ENCODE measurements at regions of chr11 and their contacts with region 1.

Region 1: DNA sequence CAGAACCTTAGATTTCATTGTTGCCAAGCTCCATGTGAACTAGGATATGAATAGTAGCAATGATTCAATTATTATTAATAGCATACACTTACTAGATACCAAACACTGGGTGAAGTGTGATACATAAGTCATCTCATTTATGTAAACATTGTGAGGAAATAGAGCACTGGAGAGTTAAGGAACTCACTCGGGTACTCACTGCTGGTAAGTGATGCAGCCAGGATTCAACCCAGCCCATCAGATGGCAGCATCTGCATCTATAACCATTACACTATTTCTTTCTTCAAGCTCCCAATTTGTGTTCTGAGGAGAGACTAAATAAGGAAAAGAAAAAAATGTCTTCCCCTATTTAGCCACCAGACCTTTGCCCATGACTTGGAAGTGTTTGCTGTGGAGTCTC is 10.2 kb upstream of the ALG8 start:
- DNase-seq: no peak
- ATAC-seq: peak in 7 of 8 donors; percentile 65 to 93 (median 75)
- H3K4me3 ChIP-seq: no peak overlapping the region
- H3K27ac ChIP-seq: no peak overlapping the region
- H3K4me1 ChIP-seq: peaks cover 0 to 10% (median 0%) of the 10 kb centered on the region in 9 donors
- H3K27me3 ChIP-seq: no peaks in the 10 kb centered on the region
- CTCF ChIP-seq: peak in 7 of 9 donors; percentile 32 to 63 (median 54)

Region 2: DNA sequence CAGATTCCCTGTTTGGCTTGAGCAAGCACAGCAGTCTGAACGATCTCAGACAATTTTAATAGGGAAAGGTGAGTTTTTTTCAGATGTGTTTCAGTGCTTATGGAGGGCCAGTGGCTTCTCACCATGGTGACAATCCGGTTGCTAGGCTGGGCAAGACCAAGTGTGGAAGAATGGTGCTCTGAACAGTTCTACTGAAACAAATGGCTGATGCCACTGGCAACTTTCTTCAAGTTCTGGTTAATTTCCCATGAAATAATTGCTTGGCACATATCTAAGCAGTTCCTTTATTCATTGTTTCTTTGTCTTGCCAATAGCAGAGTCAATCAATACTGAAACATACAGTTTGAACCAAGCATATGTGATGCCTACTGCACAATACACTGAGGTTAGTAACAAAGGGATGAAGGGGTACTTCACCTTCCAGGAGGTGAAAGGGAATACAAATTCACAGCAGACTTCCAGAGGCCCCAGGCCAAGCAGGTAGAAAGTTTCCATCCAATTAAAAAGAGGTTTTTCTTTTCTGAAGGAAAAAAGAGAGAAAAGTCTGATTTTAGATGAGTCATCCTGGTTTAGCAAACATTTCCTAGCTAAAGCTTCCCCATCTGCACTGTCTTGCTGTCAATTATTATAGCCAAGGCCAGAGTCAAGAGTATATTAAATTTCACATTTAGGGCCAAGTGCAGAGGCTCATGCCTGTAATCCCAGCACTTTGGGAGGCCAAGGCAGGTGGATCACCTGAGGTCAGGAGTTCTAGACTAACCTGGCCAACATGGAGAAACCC is 48.8 kb before region 1 on chr11:
- intact Hi-C with region 1: no loop called
- DNase-seq: no peak
- ATAC-seq: no peak
- H3K4me3 ChIP-seq: no peak overlapping the region
- H3K27ac ChIP-seq: no peak overlapping the region
- H3K4me1 ChIP-seq: peaks cover 0 to 6% (median 0%) of the 10 kb centered on the region in 9 donors
- H3K27me3 ChIP-seq: no peaks in the 10 kb centered on the region
- CTCF ChIP-seq: no peak

Region 3: GRCh38 chr11:78549624-78550409 is 400.2 kb after region 1 on chr11:
- intact Hi-C with region 1: loop called in 1 of 10 experiments (anchors 10 kb)
- DNase-seq: no peak
- ATAC-seq: no peak
- H3K4me3 ChIP-seq: no peak overlapping the region
- H3K27ac ChIP-seq: peak overlapping the region in 1 of 10 donors; percentile 20
- H3K4me1 ChIP-seq: peaks cover 0 to 19% (median 5%) of the 10 kb centered on the region in 9 donors
- H3K27me3 ChIP-seq: no peaks in the 10 kb centered on the region
- CTCF ChIP-seq: no peak

Region 4: DNA sequence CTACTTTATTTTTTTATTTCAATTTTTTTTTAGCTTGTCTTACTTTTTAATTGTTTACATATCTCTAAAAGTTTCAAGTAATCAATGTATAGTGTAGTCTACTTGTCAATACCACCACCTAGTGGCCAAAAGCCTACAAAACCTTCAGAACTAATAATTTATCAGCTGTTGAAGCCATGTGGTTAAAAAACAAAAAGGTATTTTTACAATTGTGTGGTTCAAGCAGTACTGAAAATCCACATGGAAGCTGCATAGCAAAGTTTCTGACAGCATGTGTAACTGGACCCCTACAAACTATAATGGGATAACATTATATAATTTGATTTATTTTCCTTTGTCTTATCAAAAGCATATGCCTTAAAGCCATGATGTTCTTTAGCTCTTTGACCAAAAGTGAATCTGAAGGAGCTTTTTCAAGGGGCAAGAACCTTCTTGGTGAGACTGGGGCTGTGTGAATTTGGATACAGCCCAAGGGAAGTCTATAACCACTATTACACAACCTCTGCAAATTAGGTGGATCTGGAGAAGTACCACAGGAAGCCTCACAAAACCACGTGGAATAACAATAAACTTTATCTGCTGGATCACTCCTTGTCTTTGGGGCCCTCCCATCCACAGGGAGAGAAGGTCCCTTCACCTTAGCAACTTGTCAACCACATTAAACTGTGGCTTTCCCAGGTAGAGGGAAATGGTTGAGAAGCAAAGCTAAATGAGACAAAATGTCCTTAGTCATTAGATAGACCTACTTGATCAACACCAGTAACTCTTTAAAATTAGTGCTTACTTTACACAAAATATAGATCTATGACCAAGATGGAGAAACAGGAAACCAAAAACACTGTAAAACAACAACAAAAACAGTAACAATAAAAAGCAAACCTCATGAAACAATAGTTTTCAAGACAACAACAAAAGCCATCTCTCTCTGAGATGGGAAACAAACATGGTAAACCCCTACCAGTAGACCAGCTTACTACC is 415.1 kb after region 1 on chr11:
- intact Hi-C with region 1: loop called in 6 of 10 experiments (anchors 1 to 10 kb)
- DNase-seq: peak in 1 of 2 donors; percentile 57
- ATAC-seq: peak in 6 of 8 donors; percentile 30 to 64 (median 54)
- H3K4me3 ChIP-seq: no peak overlapping the region
- H3K27ac ChIP-seq: peak overlapping the region in 1 of 10 donors; percentile 7
- H3K4me1 ChIP-seq: peaks cover 9 to 43% (median 31%) of the 10 kb centered on the region in 9 donors
- H3K27me3 ChIP-seq: no peaks in the 10 kb centered on the region
- CTCF ChIP-seq: peak; percentile 56 to 87 (median 80)

Region 5: DNA sequence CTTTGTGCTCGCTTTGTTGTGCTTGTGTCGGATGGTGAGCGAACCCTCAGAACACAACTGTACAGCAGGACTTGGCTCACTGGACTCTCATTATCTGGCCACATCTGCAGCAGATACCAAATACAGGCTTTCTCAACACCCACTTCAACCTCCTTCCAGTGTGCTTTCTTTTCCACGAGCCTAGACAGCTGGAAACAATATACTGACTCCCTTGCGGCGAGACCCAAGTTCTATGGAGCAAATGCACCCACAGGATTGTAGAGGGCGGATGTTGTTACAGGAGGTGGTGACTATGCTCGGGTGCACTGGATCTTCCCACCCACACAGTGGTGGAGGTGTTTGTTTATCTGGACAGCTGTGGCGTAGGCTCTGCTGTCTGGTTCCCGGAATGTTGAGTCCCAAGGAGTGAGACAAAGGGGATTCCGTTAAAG is 1086.9 kb after region 1 on chr11:
- intact Hi-C with region 1: no loop called
- DNase-seq: peak in 1 of 2 donors; percentile 25
- ATAC-seq: peak in 7 of 8 donors; percentile 37 to 81 (median 65)
- H3K4me3 ChIP-seq: peak overlapping the region in 2 of 10 donors; percentile 8 to 15
- H3K27ac ChIP-seq: peak overlapping the region in 5 of 10 donors; percentile 37 to 45 (median 41)
- H3K4me1 ChIP-seq: peaks cover 0 to 36% (median 17%) of the 10 kb centered on the region in 9 donors
- H3K27me3 ChIP-seq: no peaks in the 10 kb centered on the region
- CTCF ChIP-seq: no peak